Caco-2 (cell line): ENCODE measurements at regions of chr2 and their contacts with region 1.

Region 1: GRCh38 chr2:62456721-62457539 is 49.1 kb downstream of the TMEM17 start:
- DNase-seq: peak; percentile 82 to 95
- H3K4me3 ChIP-seq: peak overlapping the region; percentile 68
- H3K4me3 Mint-ChIP-seq: peak overlapping the region; percentile 75
- H3K27ac Mint-ChIP-seq: peak overlapping the region; percentile 66
- H3K4me1 ChIP-seq: peaks cover 38% of the 10 kb centered on the region
- H3K4me1 Mint-ChIP-seq: peaks cover 8% of the 10 kb centered on the region
- H3K27me3 ChIP-seq: no peaks in the 10 kb centered on the region
- H3K27me3 Mint-ChIP-seq: no peaks in the 10 kb centered on the region
- CTCF ChIP-seq: peak; percentile 92 to 98

Region 2: GRCh38 chr2:62325398-62325797 is 131.5 kb before region 1 on chr2:
- CTCF ChIA-PET with region 1: no interaction called
- POLR2A ChIA-PET with region 1: no interaction called
- intact Hi-C with region 1: no loop called
- DNase-seq: no peak
- H3K4me3 ChIP-seq: no peak overlapping the region
- H3K4me3 Mint-ChIP-seq: no peak overlapping the region
- H3K27ac Mint-ChIP-seq: no peak overlapping the region
- H3K4me1 ChIP-seq: peaks cover 17% of the 10 kb centered on the region
- H3K4me1 Mint-ChIP-seq: peaks cover 24% of the 10 kb centered on the region
- H3K27me3 ChIP-seq: no peaks in the 10 kb centered on the region
- H3K27me3 Mint-ChIP-seq: no peaks in the 10 kb centered on the region
- CTCF ChIP-seq: no peak

Region 3: GRCh38 chr2:62774555-62775366 is 317.8 kb after region 1 on chr2:
- CTCF ChIA-PET with region 1: interaction called, 34 read pairs
- POLR2A ChIA-PET with region 1: no interaction called
- intact Hi-C with region 1: loop called (anchors 1 kb)
- DNase-seq: peak in 1 of 2 experiments; percentile 60
- H3K4me3 ChIP-seq: no peak overlapping the region
- H3K4me3 Mint-ChIP-seq: no peak overlapping the region
- H3K27ac Mint-ChIP-seq: peak overlapping the region; percentile 69
- H3K4me1 ChIP-seq: 0 out of 2 replicates have a peak, but pooled peaks cover 5% of the 10 kb centered on the region
- H3K4me1 Mint-ChIP-seq: peaks cover 29% of the 10 kb centered on the region
- H3K27me3 ChIP-seq: no peaks in the 10 kb centered on the region
- H3K27me3 Mint-ChIP-seq: no peaks in the 10 kb centered on the region
- CTCF ChIP-seq: peak; percentile 72 to 86

Region 4: DNA sequence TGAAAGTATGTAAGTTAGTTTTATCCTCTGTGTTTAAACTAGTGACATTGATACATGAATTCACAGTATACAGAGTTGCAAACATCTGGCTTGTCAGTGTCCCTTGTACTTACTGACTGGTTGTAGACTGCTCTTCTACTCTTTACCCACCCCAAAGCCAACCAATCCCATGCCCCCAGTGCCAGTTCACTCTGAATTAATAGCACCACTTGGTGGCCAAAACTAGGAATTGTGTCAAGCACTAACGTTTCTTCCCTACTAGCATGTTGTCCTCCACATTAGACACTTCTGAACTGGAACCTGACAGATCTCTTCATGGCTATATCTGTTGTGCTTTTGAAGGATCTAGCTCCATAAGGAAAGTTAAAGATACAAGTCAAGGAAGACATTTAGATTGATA is 566.5 kb after region 1 on chr2:
- CTCF ChIA-PET with region 1: no interaction called
- POLR2A ChIA-PET with region 1: no interaction called
- intact Hi-C with region 1: loop called (anchors 10 kb)
- DNase-seq: peak in 1 of 2 experiments; percentile 44
- H3K4me3 ChIP-seq: no peak overlapping the region
- H3K4me3 Mint-ChIP-seq: no peak overlapping the region
- H3K27ac Mint-ChIP-seq: no peak overlapping the region
- H3K4me1 ChIP-seq: no peaks in the 10 kb centered on the region
- H3K4me1 Mint-ChIP-seq: no peaks in the 10 kb centered on the region
- H3K27me3 ChIP-seq: no peaks in the 10 kb centered on the region
- H3K27me3 Mint-ChIP-seq: no peaks in the 10 kb centered on the region
- CTCF ChIP-seq: peak; percentile 22 to 49